Activated CD4-positive, alpha-beta T cell treated with anti-CD3 and anti-CD28 coated beads, Interleukin-2, amount 10 ng/mL, durations not matched to agents 7 days and 5 days (primary cell): ENCODE measurements at regions of chr3 and their contacts with region 1.

Region 1: DNA sequence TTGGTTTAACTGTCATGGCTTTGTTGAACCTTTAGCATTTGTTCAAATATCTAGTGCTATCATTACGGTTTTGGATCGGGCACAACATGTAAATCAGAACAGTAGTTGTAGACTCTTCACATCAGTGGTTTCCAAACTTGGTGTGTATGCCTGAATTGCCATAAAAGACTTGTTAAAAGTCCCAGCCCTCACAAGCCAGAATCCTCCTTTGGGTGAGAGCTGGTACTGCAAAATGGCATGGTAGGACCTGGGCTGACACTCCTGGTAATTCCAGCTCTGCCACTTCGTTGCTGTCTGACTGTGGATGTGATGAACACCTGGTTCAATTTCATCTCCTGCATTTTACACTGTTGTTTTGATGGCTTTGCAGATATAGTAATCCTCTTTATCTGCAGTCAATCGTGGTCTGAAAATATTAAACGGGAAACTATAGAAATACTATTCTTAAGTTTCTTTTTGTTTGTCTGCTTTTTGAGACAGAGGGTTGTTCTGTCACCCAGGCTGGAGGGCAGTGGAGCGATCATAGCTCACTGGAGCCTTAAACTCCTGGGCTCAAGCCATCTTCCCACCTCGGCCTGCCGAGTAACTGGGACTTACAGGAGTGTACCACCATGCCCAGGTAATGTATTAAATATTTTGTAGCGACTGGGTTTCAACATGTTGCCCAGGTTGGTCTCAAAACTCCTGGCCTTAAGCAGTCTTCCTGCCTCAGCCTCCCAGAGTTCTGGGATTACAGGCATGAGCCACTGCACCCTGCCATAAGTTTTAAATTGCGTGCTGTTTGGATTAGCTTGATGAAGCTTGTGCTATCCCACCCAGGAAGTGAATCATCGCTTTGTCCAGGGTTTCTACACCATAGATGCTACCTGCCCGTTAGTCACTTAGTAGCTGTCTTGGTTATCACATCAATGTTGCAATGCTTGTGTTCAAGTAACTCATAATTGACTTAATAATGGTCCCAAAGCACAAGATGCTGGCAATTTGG is 61.6 kb downstream of the RAB7A start:
- DNase-seq: peak; percentile 42
- H3K4me3 Mint-ChIP-seq: peak overlapping the region; percentile 69
- H3K27ac Mint-ChIP-seq: peak overlapping the region; percentile 95
- H3K4me1 Mint-ChIP-seq: peaks cover 87% of the 10 kb centered on the region
- H3K27me3 Mint-ChIP-seq: no peaks in the 10 kb centered on the region

Region 2: DNA sequence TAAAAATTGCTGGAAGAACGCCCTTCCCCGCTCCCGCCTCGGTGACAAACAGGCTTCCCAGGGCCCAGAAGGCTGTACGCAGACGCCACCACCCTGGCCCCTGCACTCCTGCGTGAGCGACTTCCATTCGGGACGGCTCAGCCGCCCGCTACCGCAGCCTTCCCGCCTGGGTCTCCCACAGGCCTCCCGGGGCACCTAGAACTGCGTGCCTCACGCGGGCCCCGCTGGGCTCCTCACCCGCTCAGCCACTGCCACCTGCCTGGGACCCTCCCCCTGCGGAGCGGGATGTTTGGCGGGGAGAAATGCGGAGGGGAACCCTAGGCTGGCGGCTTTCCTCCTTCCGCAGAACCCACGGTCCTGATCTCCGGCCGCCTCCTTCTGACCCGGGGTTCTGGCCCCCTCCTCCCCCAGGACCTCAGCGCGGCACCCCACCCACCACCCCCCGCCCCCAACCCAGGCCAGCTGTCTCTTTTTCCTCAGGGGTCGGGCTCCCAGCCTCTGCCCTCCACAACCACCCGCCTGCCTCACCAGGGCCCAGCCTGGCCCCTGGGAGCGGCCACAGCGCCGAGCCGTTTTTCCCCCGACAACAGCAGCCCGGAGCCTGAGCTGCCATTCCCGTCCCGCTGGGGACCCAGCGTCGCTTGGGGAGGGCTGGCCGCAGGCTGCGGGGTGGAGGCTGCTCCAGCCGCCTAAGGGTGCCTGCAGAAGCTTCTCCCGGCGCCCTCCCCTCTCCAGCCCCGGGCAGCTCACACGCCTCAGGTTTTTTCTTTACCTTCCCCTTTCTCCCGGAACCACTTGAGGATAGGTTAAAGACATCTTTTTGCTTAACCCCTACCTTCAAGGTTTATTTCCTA is 89.1 kb before region 1 on chr3:
- CTCF ChIA-PET with region 1: no interaction called
- POLR2A ChIA-PET with region 1: no interaction called
- DNase-seq: peak; percentile 11
- H3K4me3 Mint-ChIP-seq: peak overlapping the region; percentile 51
- H3K27ac Mint-ChIP-seq: no peak overlapping the region
- H3K4me1 Mint-ChIP-seq: peaks cover 4% of the 10 kb centered on the region
- H3K27me3 Mint-ChIP-seq: peaks cover 5% of the 10 kb centered on the region

Region 3: DNA sequence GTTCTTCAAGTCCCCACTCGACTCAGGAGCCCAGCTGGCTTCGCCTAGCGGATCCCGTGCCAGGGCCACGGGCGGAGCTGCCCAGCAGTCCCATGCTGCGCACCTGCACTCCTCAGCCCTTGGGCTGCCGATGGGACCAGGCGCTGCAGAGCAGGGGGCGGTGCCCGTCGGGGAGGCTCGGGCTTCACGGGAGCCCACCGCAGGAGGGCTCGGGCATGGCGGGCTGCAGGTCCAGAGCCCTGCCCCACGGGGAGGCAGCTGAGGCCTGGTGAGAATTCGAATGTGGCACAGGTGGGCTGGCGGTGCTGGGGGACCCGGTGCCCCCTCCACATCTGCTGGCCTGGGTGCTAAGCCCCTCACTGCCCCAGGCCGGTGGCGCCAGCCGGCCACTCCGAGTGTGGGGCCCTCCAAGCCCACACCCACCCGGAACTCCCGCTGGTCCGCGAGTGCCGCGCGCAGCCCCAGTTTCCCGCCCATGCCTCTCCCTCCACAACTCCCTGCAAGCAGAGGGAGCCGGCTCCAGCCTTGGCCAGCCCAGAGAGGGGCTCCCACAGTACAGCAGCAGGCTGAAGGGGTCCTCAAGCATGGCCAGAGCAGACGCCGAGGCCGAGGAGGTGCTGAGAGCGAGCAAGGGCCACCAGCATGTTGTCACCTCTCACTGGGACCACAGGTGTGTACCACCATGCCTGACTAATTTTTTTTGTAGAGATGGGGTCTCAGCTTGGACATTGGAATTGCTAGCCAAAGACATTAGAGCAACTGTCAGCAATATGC is 44.5 kb before region 1 on chr3:
- CTCF ChIA-PET with region 1: no interaction called
- POLR2A ChIA-PET with region 1: no interaction called
- DNase-seq: no peak
- H3K4me3 Mint-ChIP-seq: no peak overlapping the region
- H3K27ac Mint-ChIP-seq: no peak overlapping the region
- H3K4me1 Mint-ChIP-seq: peaks cover 18% of the 10 kb centered on the region
- H3K27me3 Mint-ChIP-seq: no peaks in the 10 kb centered on the region

Region 4: GRCh38 chr3:128804017-128804810 is 16.7 kb after region 1 on chr3:
- CTCF ChIA-PET with region 1: interaction called, 18 read pairs
- POLR2A ChIA-PET with region 1: interaction called, 4 read pairs
- DNase-seq: peak; percentile 85
- H3K4me3 Mint-ChIP-seq: peak overlapping the region; percentile 74
- H3K27ac Mint-ChIP-seq: peak overlapping the region; percentile 95
- H3K4me1 Mint-ChIP-seq: peaks cover 73% of the 10 kb centered on the region
- H3K27me3 Mint-ChIP-seq: no peaks in the 10 kb centered on the region

Region 5: GRCh38 chr3:128917291-128917690 is 129.7 kb after region 1 on chr3:
- CTCF ChIA-PET with region 1: no interaction called
- POLR2A ChIA-PET with region 1: no interaction called
- DNase-seq: no peak
- H3K4me3 Mint-ChIP-seq: no peak overlapping the region
- H3K27ac Mint-ChIP-seq: no peak overlapping the region
- H3K4me1 Mint-ChIP-seq: peaks cover 10% of the 10 kb centered on the region
- H3K27me3 Mint-ChIP-seq: no peaks in the 10 kb centered on the region